ENCODE measurements at regions of chr13 and their contacts with region 1.

Region 1: GRCh38 chr13:67224148-67224846 is 5.8 kb downstream of the PCDH9 start:
- DNase-seq: peak; percentile 74 to 90 (median 88)
- ATAC-seq: peak; percentile 84 to 89
- H3K4me3 ChIP-seq: peak overlapping the region; percentile 43
- H3K27ac ChIP-seq: no peak overlapping the region
- H3K4me1 ChIP-seq: peaks cover 7% of the 10 kb centered on the region
- H3K27me3 ChIP-seq: no peaks in the 10 kb centered on the region

Region 2: DNA sequence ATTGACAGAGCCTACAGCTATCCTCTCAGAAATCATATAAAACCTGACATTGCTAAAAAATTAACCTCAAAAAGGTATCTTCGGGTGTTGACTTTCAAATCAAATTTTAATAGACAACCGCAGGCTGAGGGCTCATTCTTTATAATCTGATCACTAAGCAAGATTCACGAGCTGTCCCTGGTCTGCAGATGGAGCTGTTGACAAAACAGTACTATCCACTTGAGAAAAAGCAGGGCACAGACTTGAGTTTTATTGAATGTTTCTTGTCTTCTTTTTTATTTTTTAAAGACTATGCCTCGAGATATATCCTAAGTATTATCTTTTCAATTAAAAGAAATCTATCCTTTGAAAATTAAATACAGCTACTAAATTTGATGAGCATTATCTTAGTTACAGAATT is 534.7 kb before region 1 on chr13:
- intact Hi-C with region 1: loop called in 2 of 4 experiments (anchors 10 kb)
- DNase-seq: peak in 1 of 3 donors; percentile 9
- ATAC-seq: no peak
- H3K4me3 ChIP-seq: no peak overlapping the region
- H3K27ac ChIP-seq: no peak overlapping the region
- H3K4me1 ChIP-seq: no peaks in the 10 kb centered on the region
- H3K27me3 ChIP-seq: no peaks in the 10 kb centered on the region